ENCODE measurements at regions of chr4 and their contacts with region 1.

Region 1: GRCh38 chr4:15805583-15806517 is 27.7 kb downstream of the CD38 start:
- DNase-seq: no peak
- H3K4me3 ChIP-seq: no peak overlapping the region
- H3K27ac ChIP-seq: no peak overlapping the region
- H3K4me1 ChIP-seq: peaks cover 0 to 3% (median 0%) of the 10 kb centered on the region in 4 experiments; a peak in 1 of 7 replicates
- H3K27me3 ChIP-seq: no peaks in the 10 kb centered on the region
- CTCF ChIP-seq: peak; percentile 0 to 85 (median 78)
- EP300 ChIP-seq: no peak
- POLR2A ChIP-seq: no peak
- RAD21 ChIP-seq: peak; percentile 92 to 95

Region 2: DNA sequence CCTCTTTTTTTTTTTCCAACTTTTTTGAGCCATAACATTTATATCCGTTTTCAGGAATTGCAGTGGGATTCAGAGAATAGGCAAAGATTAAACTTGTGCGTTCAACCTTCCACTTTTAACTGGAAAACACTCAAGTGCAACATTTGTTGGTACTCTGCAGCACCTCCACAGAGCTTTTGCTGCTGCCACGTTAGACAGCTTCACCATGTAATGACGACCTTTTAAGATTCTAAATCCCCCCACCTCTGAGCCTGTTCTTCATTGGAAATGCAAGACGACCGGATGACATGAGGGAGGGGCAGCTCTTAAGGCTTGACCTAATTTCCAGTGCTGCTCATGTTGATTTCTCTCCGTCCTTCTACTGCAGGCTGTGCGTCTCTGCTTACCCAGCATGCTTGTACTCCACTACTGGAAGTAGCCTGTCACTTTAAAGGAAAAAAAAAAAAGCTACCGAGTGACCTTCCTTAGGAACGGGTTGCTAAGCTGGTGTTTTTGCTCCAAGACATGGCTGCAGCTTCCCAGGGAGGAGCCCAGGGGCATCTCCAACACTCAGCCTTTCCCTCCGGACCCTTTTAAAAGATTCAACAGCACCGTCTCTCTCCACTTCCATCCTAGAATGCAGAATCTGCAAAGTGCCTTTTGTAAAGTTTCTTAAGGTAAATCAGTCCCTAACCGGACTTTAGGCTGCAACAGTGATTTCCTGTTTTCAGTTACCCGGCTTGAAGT is 336.3 kb before region 1 on chr4 and contains the start of gene CC2D2A:
- CTCF ChIA-PET with region 1: interaction called, 11 read pairs
- POLR2A ChIA-PET with region 1: no interaction called
- DNase-seq: no peak
- H3K4me3 ChIP-seq: peak within 1 kb of the TSS; percentile 11 to 55 (median 14); a peak in 5 of 8 replicates
- H3K27ac ChIP-seq: no peak within 1 kb of the TSS
- H3K4me1 ChIP-seq: peaks cover 3 to 15% (median 5%) of the 10 kb centered on the region in 4 experiments; a peak in 4 of 7 replicates
- H3K27me3 ChIP-seq: no peaks in the 10 kb centered on the region
- CTCF ChIP-seq: no peak
- EP300 ChIP-seq: no peak
- POLR2A ChIP-seq: no peak
- RAD21 ChIP-seq: no peak
- total RNA-seq, gene CC2D2A: 11.0 and 11.1 TPM in 2 replicates

Region 3: DNA sequence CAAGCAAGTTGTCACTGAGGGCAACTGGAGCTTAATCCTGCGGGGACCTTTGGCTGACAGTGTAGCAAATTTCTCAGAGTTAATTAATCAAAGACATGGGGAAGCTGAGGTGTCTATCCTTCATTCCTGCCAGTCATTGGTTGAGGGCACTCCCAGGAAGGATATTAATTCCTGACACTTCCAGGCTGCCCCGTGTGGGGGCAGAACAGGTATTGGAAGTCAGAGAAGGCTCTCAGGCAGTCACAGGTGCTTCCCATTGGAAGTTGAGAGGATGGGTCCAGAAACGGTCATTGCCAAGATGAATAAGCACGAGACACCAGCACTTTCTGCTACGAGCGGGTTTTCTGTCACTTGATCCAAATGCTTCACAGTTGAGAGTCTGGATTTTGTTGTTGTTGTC is 56.8 kb before region 1 on chr4:
- CTCF ChIA-PET with region 1: interaction called, 13 read pairs
- POLR2A ChIA-PET with region 1: no interaction called
- DNase-seq: no peak
- H3K4me3 ChIP-seq: no peak overlapping the region
- H3K27ac ChIP-seq: no peak overlapping the region
- H3K4me1 ChIP-seq: no peaks in the 10 kb centered on the region
- H3K27me3 ChIP-seq: peaks cover 0 to 1% (median 0%) of the 10 kb centered on the region in 4 experiments; a peak in 1 of 7 replicates
- CTCF ChIP-seq: peak; percentile 18 to 46 (median 31); a peak in 3 of 4 replicates
- EP300 ChIP-seq: no peak
- POLR2A ChIP-seq: no peak
- RAD21 ChIP-seq: peak; percentile 27 to 49; a peak in 3 of 4 replicates

Region 4: DNA sequence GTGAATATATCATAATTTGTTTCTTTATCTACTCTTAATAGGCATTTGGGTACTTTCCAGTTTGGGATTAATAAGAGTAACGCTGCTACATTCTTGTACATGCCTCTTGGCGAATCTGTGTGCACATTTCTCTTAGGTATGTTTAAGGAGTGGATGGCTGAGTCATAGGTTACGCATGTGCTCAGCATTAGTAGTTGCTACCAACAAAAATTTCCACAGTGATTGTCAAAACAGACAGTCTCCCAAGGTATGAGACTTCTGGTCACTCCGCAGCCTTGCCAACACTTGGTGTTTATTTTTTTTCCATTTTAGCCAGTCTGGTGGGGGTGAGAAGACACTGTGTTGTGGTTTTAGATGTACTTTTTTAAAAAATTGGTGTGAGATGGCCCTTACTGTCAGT is 88.1 kb after region 1 on chr4:
- CTCF ChIA-PET with region 1: interaction called, 12 read pairs
- POLR2A ChIA-PET with region 1: no interaction called
- DNase-seq: no peak
- H3K4me3 ChIP-seq: no peak overlapping the region
- H3K27ac ChIP-seq: no peak overlapping the region
- H3K4me1 ChIP-seq: peaks cover 0 to 5% (median 0%) of the 10 kb centered on the region in 4 experiments; a peak in 2 of 7 replicates
- H3K27me3 ChIP-seq: no peaks in the 10 kb centered on the region
- CTCF ChIP-seq: no peak
- EP300 ChIP-seq: no peak
- POLR2A ChIP-seq: no peak
- RAD21 ChIP-seq: no peak

Region 5: DNA sequence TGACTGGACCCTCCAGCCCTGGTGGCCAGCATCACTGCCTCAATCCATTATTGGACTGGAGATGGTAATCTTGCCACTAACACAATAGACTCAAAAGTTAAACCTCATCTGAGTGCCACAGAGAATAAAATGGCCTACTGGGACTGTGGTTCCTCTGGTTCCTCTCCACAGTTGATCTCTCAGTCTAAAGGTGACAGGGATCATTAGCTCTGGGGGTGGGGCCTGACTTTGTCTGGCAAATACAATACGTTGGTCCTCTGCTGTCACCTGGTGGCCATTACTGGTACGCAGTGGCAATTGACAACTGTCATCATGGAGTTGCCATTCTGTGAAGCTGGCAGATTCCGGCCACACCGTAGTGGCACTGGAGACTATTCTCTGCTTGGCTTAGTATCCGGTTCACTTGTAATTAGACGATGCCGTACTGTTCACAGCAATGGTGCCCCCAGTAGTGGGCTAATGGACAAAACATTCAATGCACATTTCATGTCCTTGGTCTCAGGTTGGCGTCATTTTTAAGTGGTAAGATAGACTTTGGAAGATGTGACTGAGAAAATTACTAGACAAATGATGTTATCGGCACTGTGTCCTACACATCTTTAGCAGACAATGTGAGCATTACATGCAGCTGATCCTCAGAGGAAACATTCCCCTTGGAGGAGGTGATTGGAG is 150.5 kb after region 1 on chr4:
- CTCF ChIA-PET with region 1: interaction called, 107 read pairs
- POLR2A ChIA-PET with region 1: interaction called, 4 read pairs
- DNase-seq: peak in 1 of 2 experiments; percentile 92
- H3K4me3 ChIP-seq: no peak overlapping the region
- H3K27ac ChIP-seq: no peak overlapping the region
- H3K4me1 ChIP-seq: peaks cover 0 to 4% (median under 1%) of the 10 kb centered on the region in 4 experiments; a peak in 2 of 7 replicates
- H3K27me3 ChIP-seq: no peaks in the 10 kb centered on the region
- CTCF ChIP-seq: peak; percentile 74 to 98 (median 97)
- EP300 ChIP-seq: no peak
- POLR2A ChIP-seq: no peak
- RAD21 ChIP-seq: peak; percentile 99

Region 6: GRCh38 chr4:16001484-16001858 is 195.6 kb after region 1 on chr4:
- CTCF ChIA-PET with region 1: interaction called, 22 read pairs
- POLR2A ChIA-PET with region 1: interaction called, 3 read pairs
- DNase-seq: peak; percentile 61 to 63
- H3K4me3 ChIP-seq: no peak overlapping the region
- H3K27ac ChIP-seq: no peak overlapping the region
- H3K4me1 ChIP-seq: no peaks in the 10 kb centered on the region; a peak in 1 of 7 replicates
- H3K27me3 ChIP-seq: no peaks in the 10 kb centered on the region
- CTCF ChIP-seq: peak; percentile 78 to 98 (median 82)
- EP300 ChIP-seq: no peak
- POLR2A ChIP-seq: 0 out of 3 replicates have a peak, but pooled peaks of 1 of the 2 experiments have one; percentile 26
- RAD21 ChIP-seq: peak; percentile 84 to 89